CD4-positive, alpha-beta memory T cell (primary cell): ENCODE measurements at regions of chr3 and their contacts with region 1.

Region 1: DNA sequence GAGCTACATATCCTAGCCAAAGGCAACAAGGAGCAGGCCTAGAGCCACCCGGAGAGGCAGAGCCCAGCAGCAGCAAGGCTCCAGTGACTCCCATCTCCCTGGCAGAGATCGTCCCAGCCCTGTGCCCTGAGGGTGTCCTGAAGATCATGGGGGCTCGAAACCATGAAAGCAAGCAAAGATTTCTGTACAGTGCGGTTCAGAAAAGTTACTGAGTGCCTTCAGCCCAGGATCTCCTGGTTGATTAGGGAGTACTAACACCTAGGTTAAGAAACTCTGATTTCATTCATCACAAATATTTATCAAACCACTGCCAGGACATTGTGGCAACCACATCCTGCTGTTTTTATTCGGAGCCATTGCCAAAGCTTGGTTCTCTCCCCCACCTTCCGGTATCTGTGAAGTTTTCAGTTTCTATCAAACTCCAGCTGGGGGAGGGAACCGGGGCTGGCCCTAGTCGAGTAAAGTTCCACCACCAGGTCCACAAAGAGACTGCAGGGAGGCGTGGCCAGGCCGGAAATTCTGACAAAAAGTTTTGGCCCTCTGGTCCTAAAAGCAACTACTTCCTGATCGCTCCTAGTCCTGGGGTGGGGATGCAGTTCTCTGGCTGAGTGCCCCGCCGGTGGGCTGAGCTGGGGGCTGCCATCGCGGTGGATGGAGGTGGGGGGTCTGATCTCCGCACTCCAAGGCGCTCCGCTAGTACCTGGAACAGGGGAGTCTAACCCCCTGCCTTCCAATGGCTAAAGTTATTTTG is 1.2 kb downstream of the RAB43 start:
- DNase-seq: peak; percentile 92 to 97 (median 95)
- H3K4me3 ChIP-seq: peak overlapping the region; percentile 73 to 79
- H3K4me3 Mint-ChIP-seq: peak overlapping the region; percentile 92 to 99 (median 94)
- H3K27ac ChIP-seq: peak overlapping the region; percentile 62
- H3K27ac Mint-ChIP-seq: peak overlapping the region; percentile 94 to 99 (median 98)
- H3K4me1 ChIP-seq: peaks cover 54% of the 10 kb centered on the region
- H3K4me1 Mint-ChIP-seq: peaks cover 34 to 70% (median 52%) of the 10 kb centered on the region in 4 donors
- H3K27me3 ChIP-seq: no peaks in the 10 kb centered on the region
- H3K27me3 Mint-ChIP-seq: no peaks in the 10 kb centered on the region

Region 2: DNA sequence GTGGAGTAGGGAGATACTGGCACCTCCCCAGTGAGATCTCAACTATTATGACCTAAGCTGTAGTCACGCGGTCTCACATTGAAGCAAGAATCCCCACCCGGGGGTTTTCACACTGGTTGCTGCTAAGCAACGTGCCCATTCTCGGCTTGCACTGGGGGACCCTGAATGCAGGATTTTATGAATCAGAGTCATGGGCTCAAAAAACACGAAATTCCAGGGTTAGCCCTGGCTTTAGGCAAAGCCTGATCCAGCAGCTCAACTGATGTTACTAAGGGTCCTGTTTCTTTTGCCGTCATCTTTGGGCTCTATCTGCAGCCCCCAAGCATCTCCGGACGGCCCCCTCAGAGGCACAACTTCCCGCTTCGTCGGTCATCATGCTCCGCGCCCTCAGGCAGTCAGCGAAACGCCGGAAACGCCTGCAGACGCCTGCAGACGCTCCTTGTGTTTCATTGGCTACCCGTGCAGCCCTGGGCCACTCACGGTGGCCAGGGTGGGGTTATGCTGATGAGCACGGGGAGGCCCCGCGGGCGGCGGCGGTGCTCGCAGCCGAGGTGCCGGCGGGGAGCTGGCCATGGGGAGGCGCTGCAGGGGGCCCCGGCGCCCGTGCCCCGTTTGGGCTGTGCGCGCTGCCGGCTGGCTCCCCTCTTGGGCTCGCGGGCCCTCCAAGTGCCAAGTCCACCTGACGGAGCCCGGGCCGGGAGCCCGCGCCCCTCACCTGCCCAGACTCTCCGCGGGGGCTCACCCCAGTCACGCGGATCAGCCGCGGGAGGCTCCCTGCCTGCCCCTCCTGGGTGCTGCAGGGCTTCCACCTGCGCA is 93.5 kb before region 1 on chr3:
- CTCF ChIA-PET with region 1: interaction called, 9 read pairs
- POLR2A ChIA-PET with region 1: interaction called, 24 read pairs
- intact Hi-C with region 1: loop called (anchors 1 kb)
- DNase-seq: peak; percentile 91 to 95 (median 94)
- H3K4me3 ChIP-seq: peak overlapping the region; percentile 42 to 57
- H3K4me3 Mint-ChIP-seq: peak overlapping the region; percentile 76 to 88 (median 85)
- H3K27ac ChIP-seq: peak overlapping the region; percentile 55
- H3K27ac Mint-ChIP-seq: peak overlapping the region; percentile 91 to 97 (median 97)
- H3K4me1 ChIP-seq: peaks cover 16% of the 10 kb centered on the region
- H3K4me1 Mint-ChIP-seq: peaks cover 10 to 25% (median 16%) of the 10 kb centered on the region in 4 donors
- H3K27me3 ChIP-seq: no peaks in the 10 kb centered on the region
- H3K27me3 Mint-ChIP-seq: no peaks in the 10 kb centered on the region

Region 3: DNA sequence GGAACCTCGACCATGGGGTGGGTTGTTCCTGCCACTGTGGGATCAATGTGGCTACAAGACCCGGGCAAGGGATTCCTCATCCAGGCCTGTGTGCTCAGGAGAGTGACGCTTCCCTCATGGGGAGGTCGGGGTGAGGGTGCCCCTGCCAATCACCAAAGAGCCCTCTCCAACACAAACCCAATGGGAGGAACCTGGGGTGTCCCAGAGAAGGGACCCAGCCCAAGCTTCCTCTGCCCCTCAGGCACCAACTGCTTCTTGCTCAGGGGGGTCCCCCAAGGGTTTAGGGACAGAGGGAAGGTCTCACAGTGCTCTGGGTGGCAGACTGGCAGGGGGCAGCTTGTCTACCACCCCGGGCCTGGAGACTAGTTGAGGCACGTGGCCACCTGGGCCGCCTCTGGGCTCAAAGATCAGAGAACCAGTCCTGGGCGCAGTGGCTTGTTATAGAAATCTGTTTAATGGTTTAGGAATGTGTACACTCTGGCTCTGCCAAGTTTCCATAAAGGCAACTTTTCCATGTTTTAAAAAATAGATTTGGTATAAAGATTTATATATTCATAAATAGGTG is 33.2 kb before region 1 on chr3:
- CTCF ChIA-PET with region 1: interaction called, 3 read pairs
- POLR2A ChIA-PET with region 1: interaction called, 17 read pairs
- intact Hi-C with region 1: no loop called
- DNase-seq: no peak
- H3K4me3 ChIP-seq: no peak overlapping the region
- H3K4me3 Mint-ChIP-seq: no peak overlapping the region
- H3K27ac ChIP-seq: no peak overlapping the region
- H3K27ac Mint-ChIP-seq: no peak overlapping the region
- H3K4me1 ChIP-seq: no peaks in the 10 kb centered on the region
- H3K4me1 Mint-ChIP-seq: peaks cover 0 to 5% (median 3%) of the 10 kb centered on the region in 4 donors
- H3K27me3 ChIP-seq: no peaks in the 10 kb centered on the region
- H3K27me3 Mint-ChIP-seq: no peaks in the 10 kb centered on the region

Region 4: DNA sequence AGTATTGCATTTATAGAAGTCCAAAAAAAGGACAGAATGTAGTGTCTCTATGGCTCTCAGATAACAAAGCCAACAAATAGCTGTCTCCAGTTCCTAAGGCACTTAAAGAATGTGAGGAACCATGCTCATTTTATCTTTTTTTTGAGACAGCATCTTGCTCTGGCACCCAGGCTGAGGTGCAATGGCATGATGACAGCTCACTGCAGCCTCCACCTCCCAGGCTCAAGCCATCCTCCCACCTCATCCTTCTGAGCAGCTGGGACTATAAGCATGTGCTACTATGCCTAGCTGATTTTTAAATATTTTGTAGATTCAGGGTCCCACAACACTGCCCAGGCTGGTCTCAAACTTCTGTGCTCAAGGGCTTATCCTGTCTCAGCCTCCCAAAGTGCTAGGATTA is 24.4 kb after region 1 on chr3:
- CTCF ChIA-PET with region 1: interaction called, 3 read pairs
- POLR2A ChIA-PET with region 1: interaction called, 16 read pairs
- intact Hi-C with region 1: no loop called
- DNase-seq: no peak
- H3K4me3 ChIP-seq: no peak overlapping the region
- H3K4me3 Mint-ChIP-seq: no peak overlapping the region
- H3K27ac ChIP-seq: no peak overlapping the region
- H3K27ac Mint-ChIP-seq: no peak overlapping the region
- H3K4me1 ChIP-seq: no peaks in the 10 kb centered on the region
- H3K4me1 Mint-ChIP-seq: peaks cover 0 to 4% (median 3%) of the 10 kb centered on the region in 4 donors
- H3K27me3 ChIP-seq: no peaks in the 10 kb centered on the region
- H3K27me3 Mint-ChIP-seq: no peaks in the 10 kb centered on the region

Region 5: DNA sequence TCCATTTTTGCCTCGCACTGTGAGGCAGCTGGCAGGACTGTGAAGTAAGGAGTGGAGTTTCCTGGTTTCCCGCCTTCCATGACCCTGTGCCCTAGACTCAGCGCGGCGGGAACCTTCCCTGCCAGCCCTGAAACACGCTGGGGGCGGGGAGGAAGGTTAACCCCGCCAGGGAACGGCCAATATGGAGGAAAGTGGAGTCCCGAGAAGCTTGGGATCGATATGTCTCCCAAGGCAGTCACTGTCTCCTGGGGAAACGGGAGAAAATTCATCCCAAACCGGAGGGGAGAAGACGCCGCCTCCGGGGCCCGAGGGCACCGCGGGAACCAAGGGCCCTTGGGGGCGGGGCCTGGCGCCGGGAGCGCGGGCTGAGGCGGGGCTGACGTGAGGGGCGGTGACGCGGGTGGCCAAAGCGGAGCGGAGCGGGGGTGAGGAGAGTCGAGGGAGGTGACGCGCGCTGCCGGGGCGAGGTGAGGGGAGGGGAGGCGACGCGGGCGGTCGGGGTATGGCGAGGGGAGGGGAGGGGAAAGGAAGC is 158.1 kb after region 1 on chr3 and contains the start of gene HMCES:
- CTCF ChIA-PET with region 1: no interaction called
- POLR2A ChIA-PET with region 1: interaction called, 35 read pairs
- intact Hi-C with region 1: no loop called
- DNase-seq: peak; percentile 93 to 97 (median 95)
- H3K4me3 ChIP-seq: peak within 1 kb of the TSS; percentile 69 to 85
- H3K4me3 Mint-ChIP-seq: peak within 1 kb of the TSS; percentile 94 to 99 (median 98)
- H3K27ac ChIP-seq: peak within 1 kb of the TSS; percentile 99
- H3K27ac Mint-ChIP-seq: peak within 1 kb of the TSS; percentile 90 to 100 (median 99)
- H3K4me1 ChIP-seq: peaks cover 44% of the 10 kb centered on the region
- H3K4me1 Mint-ChIP-seq: peaks cover 22 to 50% (median 38%) of the 10 kb centered on the region in 4 donors
- H3K27me3 ChIP-seq: no peaks in the 10 kb centered on the region
- H3K27me3 Mint-ChIP-seq: no peaks in the 10 kb centered on the region
- total RNA-seq, gene HMCES: 50.1 to 52.5 TPM